Prostate gland (tissue), 2 donors: ENCODE measurements at regions of chr13 and their contacts with region 1.

Region 1: DNA sequence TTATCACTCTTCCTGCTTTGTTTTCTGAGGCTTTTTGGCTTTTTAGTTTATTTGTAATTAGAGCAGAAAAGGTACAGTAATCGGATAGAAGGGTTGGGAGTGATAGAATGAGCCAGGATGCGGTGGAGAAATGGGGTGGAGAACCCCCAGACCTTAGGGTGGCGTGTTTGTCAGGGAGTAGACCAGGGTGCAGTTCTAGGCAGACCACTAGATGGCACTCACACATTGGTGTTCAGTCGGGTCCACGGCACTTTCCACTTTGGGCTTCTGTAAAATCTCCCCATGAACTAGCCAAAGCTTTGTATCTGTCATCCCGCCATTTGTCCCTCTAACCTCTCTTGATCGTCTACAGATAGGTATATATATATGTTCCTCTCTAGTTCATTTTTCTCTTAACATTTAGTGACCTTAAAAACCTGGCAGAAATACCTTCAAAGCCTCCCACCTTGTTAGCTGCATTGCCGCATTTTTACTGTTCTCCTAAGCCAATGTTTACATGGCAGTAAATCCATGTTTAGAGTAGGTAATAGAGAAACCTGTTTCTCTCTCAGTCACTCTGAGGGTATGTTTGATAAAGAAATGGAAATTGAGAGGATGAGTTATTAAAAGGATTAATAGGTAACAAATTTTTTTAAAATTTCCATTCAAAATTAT is 154.9 kb downstream of the TM9SF2 start:
- DNase-seq: peak; percentile 81
- H3K4me3 ChIP-seq: no peak overlapping the region
- H3K27ac ChIP-seq: no peak overlapping the region
- H3K4me1 ChIP-seq: no peaks in the 10 kb centered on the region
- H3K27me3 ChIP-seq: no peaks in the 10 kb centered on the region
- CTCF ChIP-seq: peak; percentile 84 to 92 (median 88)
- POLR2A ChIP-seq: no peak

Region 2: GRCh38 chr13:99501184-99501847 is 154.9 kb before region 1 on chr13 and contains the start of gene TM9SF2:
- intact Hi-C with region 1: no loop called
- DNase-seq: peak; percentile 94
- H3K4me3 ChIP-seq: peak within 1 kb of the TSS; percentile 78 to 93
- H3K27ac ChIP-seq: peak within 1 kb of the TSS; percentile 87 to 91
- H3K4me1 ChIP-seq: peaks cover 5% of the 10 kb centered on the region
- H3K27me3 ChIP-seq: no peaks in the 10 kb centered on the region
- CTCF ChIP-seq: no peak
- POLR2A ChIP-seq: peak; percentile 61
- total RNA-seq, gene TM9SF2: 136 to 175 TPM

Region 3: GRCh38 chr13:99916366-99917103 is 260.3 kb after region 1 on chr13:
- intact Hi-C with region 1: loop called (anchors 2 kb)
- DNase-seq: peak; percentile 23
- H3K4me3 ChIP-seq: no peak overlapping the region
- H3K27ac ChIP-seq: no peak overlapping the region
- H3K4me1 ChIP-seq: no peaks in the 10 kb centered on the region
- H3K27me3 ChIP-seq: no peaks in the 10 kb centered on the region
- CTCF ChIP-seq: peak; percentile 55 to 90 (median 82)
- POLR2A ChIP-seq: no peak